ENCODE measurements at regions of chr11 and their contacts with region 1.

Region 1: GRCh38 chr11:74449369-74449931 is 17.9 kb downstream of the KCNE3 start:
- DNase-seq: peak; percentile 65
- CTCF ChIP-seq: peak; percentile 59

Region 2: GRCh38 chr11:74255741-74256369 is 193.6 kb before region 1 on chr11:
- CTCF ChIA-PET with region 1: interaction called, 37 read pairs
- POLR2A ChIA-PET with region 1: no interaction called
- DNase-seq: peak; percentile 79
- CTCF ChIP-seq: peak; percentile 87

Region 3: GRCh38 chr11:74434528-74434927 is 14.9 kb before region 1 on chr11:
- CTCF ChIA-PET with region 1: interaction called, 44 read pairs
- POLR2A ChIA-PET with region 1: no interaction called
- DNase-seq: no peak
- CTCF ChIP-seq: no peak

Region 4: DNA sequence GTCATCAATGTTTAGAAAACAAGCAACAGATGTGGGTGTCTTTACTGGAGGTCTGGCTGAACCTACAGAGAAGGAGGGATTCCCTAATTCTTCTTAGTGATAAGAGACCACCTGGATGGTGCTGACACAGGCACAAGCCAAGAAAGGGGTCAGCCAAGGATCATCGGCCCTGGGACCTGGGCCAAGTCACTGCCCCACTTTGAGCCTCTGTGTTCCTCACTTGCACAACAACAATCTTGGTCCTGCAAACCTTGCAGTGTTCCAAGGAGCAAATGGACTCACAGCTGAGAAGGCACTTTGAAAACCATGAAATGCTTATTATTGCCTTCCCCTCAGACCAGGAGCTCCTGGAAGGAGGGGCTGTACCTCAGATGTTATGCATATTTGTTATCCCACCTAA is 24.9 kb after region 1 on chr11:
- CTCF ChIA-PET with region 1: interaction called, 14 read pairs
- POLR2A ChIA-PET with region 1: no interaction called
- DNase-seq: no peak
- CTCF ChIP-seq: no peak

Region 5: DNA sequence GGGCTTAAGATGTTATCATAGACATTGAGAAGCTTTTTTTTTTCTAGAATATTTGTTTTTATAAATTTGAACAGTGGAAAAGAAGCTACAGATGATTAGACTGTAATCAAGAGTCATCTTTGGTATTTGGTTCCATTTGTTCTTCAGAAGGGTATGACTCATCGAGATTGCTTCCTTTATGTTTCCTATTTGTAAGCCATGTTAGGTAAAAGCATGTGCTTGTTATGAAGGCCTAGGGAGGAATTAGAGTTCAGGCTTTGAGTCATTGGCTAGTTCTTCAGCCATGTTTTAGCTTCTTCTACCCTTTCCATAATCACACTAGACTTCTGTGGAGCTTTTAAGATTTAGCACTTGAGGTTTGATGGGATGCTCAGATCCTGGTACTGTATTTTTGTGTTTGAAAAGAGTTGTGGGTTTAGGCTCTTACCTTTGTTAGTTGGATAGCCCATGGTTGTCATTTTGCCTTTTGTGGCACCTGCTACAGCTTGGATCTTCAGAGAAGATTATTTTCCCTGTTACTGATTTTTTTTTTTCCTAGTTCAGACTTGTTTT is 187.3 kb after region 1 on chr11:
- CTCF ChIA-PET with region 1: no interaction called
- POLR2A ChIA-PET with region 1: no interaction called
- DNase-seq: no peak
- CTCF ChIP-seq: no peak

Region 6: DNA sequence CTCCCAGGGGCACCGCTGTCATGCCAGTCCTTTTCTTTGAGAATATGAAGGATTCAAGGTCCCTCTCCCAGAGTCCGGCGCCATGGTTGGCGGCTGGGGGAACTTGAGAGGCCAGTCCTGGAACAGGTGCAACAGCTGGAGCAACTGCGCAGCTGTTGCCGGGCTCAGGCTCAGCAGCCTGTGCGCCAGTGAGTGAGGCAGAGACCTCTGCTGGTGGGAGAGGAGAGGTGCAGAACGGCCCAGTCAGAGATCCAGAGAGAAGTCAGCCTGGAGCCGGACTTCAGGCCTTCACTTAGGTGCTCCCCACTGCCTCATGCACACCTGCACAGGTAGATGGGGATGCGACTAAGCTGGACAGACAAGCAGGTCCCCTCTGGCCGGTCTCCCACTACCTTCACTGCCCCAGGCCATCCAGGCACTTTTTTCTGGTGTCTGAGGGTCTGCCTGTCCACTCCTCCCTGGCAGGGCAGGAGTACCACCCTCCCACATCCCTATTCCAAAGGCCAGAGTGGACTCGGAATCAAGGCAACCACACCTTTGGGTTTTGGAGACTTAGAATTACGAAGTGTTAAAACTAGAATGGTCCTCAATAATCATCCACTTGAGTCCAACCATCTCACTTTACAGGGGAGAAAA is 277.2 kb after region 1 on chr11:
- CTCF ChIA-PET with region 1: interaction called, 18 read pairs
- POLR2A ChIA-PET with region 1: no interaction called
- DNase-seq: peak; percentile 87
- CTCF ChIP-seq: peak; percentile 94

Region 7: GRCh38 chr11:74929431-74930363 is 480.2 kb after region 1 on chr11:
- CTCF ChIA-PET with region 1: no interaction called
- POLR2A ChIA-PET with region 1: no interaction called
- DNase-seq: peak; percentile 54
- CTCF ChIP-seq: peak; percentile 90

Measured in GM10248 (cell line).